ENCODE measurements at regions of chr13 and their contacts with region 1.

Region 1: DNA sequence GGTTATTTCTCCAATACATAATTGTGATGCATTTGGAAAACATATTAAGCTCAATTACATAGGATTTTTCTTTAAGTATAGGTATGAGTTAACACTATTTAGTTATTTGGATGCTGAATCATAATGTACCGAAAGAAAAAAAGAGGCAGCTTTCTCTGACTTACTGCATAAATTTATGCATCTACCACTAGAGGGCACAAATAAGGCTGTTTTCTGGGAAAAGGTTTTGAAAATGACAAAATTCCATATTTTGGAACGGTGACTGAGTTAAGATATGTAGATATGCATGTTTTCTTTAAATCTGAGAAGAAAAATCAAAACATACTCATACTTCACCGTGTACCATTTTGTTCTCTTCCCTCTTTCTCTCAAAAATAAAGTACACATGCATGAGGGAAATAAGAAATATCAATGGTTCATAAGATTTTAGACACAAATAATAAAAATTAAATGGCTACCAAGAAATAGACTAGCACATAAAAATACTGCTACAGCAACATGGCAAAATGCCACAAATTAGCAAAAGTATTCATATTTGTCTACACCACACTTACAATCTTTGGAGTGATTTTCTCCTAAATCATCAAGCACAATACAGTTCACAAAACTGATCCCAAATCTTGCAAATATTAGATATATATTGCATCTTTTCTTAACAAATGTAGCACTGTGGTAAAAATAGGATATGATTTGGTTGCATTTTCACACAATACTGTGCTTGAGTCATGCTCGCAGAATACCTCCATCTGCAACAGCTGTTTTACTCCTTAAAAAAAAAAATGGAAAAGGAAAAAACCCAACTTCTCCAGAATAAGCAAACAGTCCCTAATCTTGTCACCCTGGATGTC is 260.0 kb downstream of the FGF14 start:
- DNase-seq: peak; percentile 39
- ATAC-seq: peak; percentile 31; the same call in 1 of the 2 replicates
- H3K4me3 ChIP-seq: no peak overlapping the region
- H3K27ac ChIP-seq: no peak overlapping the region
- H3K4me1 ChIP-seq: no peaks in the 10 kb centered on the region
- H3K27me3 ChIP-seq: peaks cover 9% of the 10 kb centered on the region; the same call in 1 of the 2 replicates
- CTCF ChIP-seq: peak; percentile 72

Region 2: DNA sequence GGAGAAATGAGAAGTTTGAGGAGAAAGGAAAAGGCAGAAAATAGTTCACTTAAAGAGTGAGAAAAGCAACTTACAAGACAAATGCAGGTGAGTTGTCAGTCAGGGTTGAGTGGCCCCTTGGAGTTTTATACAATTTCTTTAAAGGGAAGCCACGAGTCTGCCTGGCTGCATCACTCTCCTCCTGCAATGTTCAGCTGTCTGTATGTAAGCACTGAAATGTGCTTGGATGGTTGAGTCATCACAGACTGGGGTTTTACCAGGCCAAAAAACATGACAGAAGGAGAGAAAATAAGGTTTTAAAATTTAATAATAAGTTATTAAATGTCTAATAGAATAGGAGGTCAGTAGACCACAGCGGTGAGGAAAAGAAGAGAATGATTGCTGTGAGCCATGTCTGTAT is 311.0 kb after region 1 on chr13:
- CTCF ChIA-PET with region 1: no interaction called
- POLR2A ChIA-PET with region 1: no interaction called
- intact Hi-C with region 1: loop called (anchors 10 kb)
- DNase-seq: no peak
- ATAC-seq: no peak
- H3K4me3 ChIP-seq: no peak overlapping the region
- H3K27ac ChIP-seq: no peak overlapping the region
- H3K4me1 ChIP-seq: no peaks in the 10 kb centered on the region
- H3K27me3 ChIP-seq: peaks cover 27% of the 10 kb centered on the region
- CTCF ChIP-seq: no peak

Measured in PC-3 (cell line).